ENCODE measurements at regions of chr17 and their contacts with region 1.

Region 1: GRCh38 chr17:65022751-65023700 is 33.5 kb downstream of the GNA13 start:
- DNase-seq: no peak
- ATAC-seq: peak in 3 of 4 donors; percentile 31 to 43 (median 36)
- H3K4me3 ChIP-seq: no peak overlapping the region
- H3K27ac ChIP-seq: peak overlapping the region in 3 of 12 donors; percentile 4 to 61 (median 13)
- H3K4me1 ChIP-seq: peaks cover 10 to 93% (median 46%) of the 10 kb centered on the region in 12 donors
- H3K27me3 ChIP-seq: no peaks in the 10 kb centered on the region
- CTCF ChIP-seq: no peak
- POLR2A ChIP-seq: no peak

Region 2: GRCh38 chr17:64975329-64976087 is 47.5 kb before region 1 on chr17:
- intact Hi-C with region 1: loop called in 1 of 10 experiments (anchors 5 kb)
- DNase-seq: peak; percentile 94 to 98 (median 96)
- ATAC-seq: peak; percentile 90 to 98 (median 96)
- H3K4me3 ChIP-seq: peak overlapping the region; percentile 59 to 98 (median 82)
- H3K27ac ChIP-seq: peak overlapping the region; percentile 94 to 100 (median 98)
- H3K4me1 ChIP-seq: peaks cover 0 to 26% (median 16%) of the 10 kb centered on the region in 12 donors
- H3K27me3 ChIP-seq: no peaks in the 10 kb centered on the region
- CTCF ChIP-seq: peak in 1 of 12 donors; percentile 4
- POLR2A ChIP-seq: peak; percentile 47 to 89

Region 3: GRCh38 chr17:65047942-65048341 is 24.9 kb after region 1 on chr17:
- intact Hi-C with region 1: no loop called
- DNase-seq: no peak
- ATAC-seq: peak in 3 of 4 donors; percentile 72 to 82 (median 79)
- H3K4me3 ChIP-seq: peak overlapping the region in 1 of 12 donors; percentile 6
- H3K27ac ChIP-seq: peak overlapping the region in 8 of 12 donors; percentile 8 to 92 (median 32)
- H3K4me1 ChIP-seq: peaks cover 0 to 99% (median 43%) of the 10 kb centered on the region in 12 donors
- H3K27me3 ChIP-seq: no peaks in the 10 kb centered on the region
- CTCF ChIP-seq: no peak
- POLR2A ChIP-seq: no peak

Region 4: GRCh38 chr17:65093930-65094329 is 70.9 kb after region 1 on chr17:
- intact Hi-C with region 1: no loop called
- DNase-seq: no peak
- ATAC-seq: no peak
- H3K4me3 ChIP-seq: no peak overlapping the region
- H3K27ac ChIP-seq: no peak overlapping the region
- H3K4me1 ChIP-seq: peaks cover 0 to under 1% (median 0%) of the 10 kb centered on the region in 12 donors
- H3K27me3 ChIP-seq: peaks cover 0 to 3% (median 0%) of the 10 kb centered on the region in 9 donors
- CTCF ChIP-seq: no peak
- POLR2A ChIP-seq: no peak

Measured in heart left ventricle (tissue), 16 donors.